CD4-positive, alpha-beta T cell (primary cell): ENCODE measurements at regions of chr12 and their contacts with region 1.

Region 1: GRCh38 chr12:95217377-95218149 is at the starts of genes FGD6 and VEZT:
- DNase-seq: peak; percentile 94 to 99 (median 98)
- ATAC-seq: peak; percentile 90
- H3K4me3 ChIP-seq: peak within 1 kb of the TSS; percentile 86
- H3K4me3 Mint-ChIP-seq: peak within 1 kb of the TSS; percentile 94
- H3K27ac ChIP-seq: peak within 1 kb of the TSS; percentile 95 to 96
- H3K27ac Mint-ChIP-seq: peak within 1 kb of the TSS; percentile 88
- H3K4me1 ChIP-seq: peaks cover 12% of the 10 kb centered on the region
- H3K4me1 Mint-ChIP-seq: peaks cover 47% of the 10 kb centered on the region
- H3K27me3 ChIP-seq: no peaks in the 10 kb centered on the region
- H3K27me3 Mint-ChIP-seq: peaks cover 4% of the 10 kb centered on the region
- CTCF ChIP-seq: peak; percentile 65
- total RNA-seq, gene FGD6: 1.5 TPM
- total RNA-seq, gene VEZT: 52.6 to 57.2 TPM

Region 2: GRCh38 chr12:93476555-93476954 is 1741.0 kb before region 1 on chr12:
- CTCF ChIA-PET with region 1: no interaction called
- POLR2A ChIA-PET with region 1: no interaction called
- intact Hi-C with region 1: no loop called
- DNase-seq: no peak
- ATAC-seq: no peak
- H3K4me3 ChIP-seq: no peak overlapping the region
- H3K4me3 Mint-ChIP-seq: no peak overlapping the region
- H3K27ac ChIP-seq: no peak overlapping the region
- H3K27ac Mint-ChIP-seq: no peak overlapping the region
- H3K4me1 ChIP-seq: no peaks in the 10 kb centered on the region
- H3K4me1 Mint-ChIP-seq: no peaks in the 10 kb centered on the region
- H3K27me3 ChIP-seq: no peaks in the 10 kb centered on the region
- H3K27me3 Mint-ChIP-seq: no peaks in the 10 kb centered on the region
- CTCF ChIP-seq: no peak

Region 3: GRCh38 chr12:95072900-95073697 is 144.5 kb before region 1 on chr12 and contains the start of gene NR2C1:
- CTCF ChIA-PET with region 1: interaction called, 13 read pairs
- POLR2A ChIA-PET with region 1: interaction called, 12 read pairs
- intact Hi-C with region 1: loop called (anchors 2 kb)
- DNase-seq: peak; percentile 85 to 97 (median 90)
- ATAC-seq: peak; percentile 98
- H3K4me3 ChIP-seq: peak within 1 kb of the TSS; percentile 84
- H3K4me3 Mint-ChIP-seq: peak within 1 kb of the TSS; percentile 98
- H3K27ac ChIP-seq: peak within 1 kb of the TSS; percentile 62 to 72
- H3K27ac Mint-ChIP-seq: peak within 1 kb of the TSS; percentile 89
- H3K4me1 ChIP-seq: peaks cover 17% of the 10 kb centered on the region
- H3K4me1 Mint-ChIP-seq: peaks cover 23% of the 10 kb centered on the region
- H3K27me3 ChIP-seq: no peaks in the 10 kb centered on the region
- H3K27me3 Mint-ChIP-seq: no peaks in the 10 kb centered on the region
- CTCF ChIP-seq: no peak
- total RNA-seq, gene NR2C1: 48.3 to 58.9 TPM

Region 4: GRCh38 chr12:95117178-95117599 is 100.4 kb before region 1 on chr12:
- CTCF ChIA-PET with region 1: interaction called, 13 read pairs
- POLR2A ChIA-PET with region 1: interaction called, 4 read pairs
- intact Hi-C with region 1: loop called (anchors 1 to 2 kb)
- DNase-seq: peak; percentile 24 to 80 (median 50)
- ATAC-seq: peak; percentile 86
- H3K4me3 ChIP-seq: no peak overlapping the region
- H3K4me3 Mint-ChIP-seq: no peak overlapping the region
- H3K27ac ChIP-seq: no peak overlapping the region
- H3K27ac Mint-ChIP-seq: no peak overlapping the region
- H3K4me1 ChIP-seq: no peaks in the 10 kb centered on the region
- H3K4me1 Mint-ChIP-seq: no peaks in the 10 kb centered on the region
- H3K27me3 ChIP-seq: no peaks in the 10 kb centered on the region
- H3K27me3 Mint-ChIP-seq: no peaks in the 10 kb centered on the region
- CTCF ChIP-seq: peak; percentile 84

Region 5: GRCh38 chr12:95473884-95474659 is 256.5 kb after region 1 on chr12 and contains the start of gene METAP2:
- CTCF ChIA-PET with region 1: interaction called, 4 read pairs
- POLR2A ChIA-PET with region 1: interaction called, 62 read pairs
- intact Hi-C with region 1: loop called (anchors 1 to 5 kb)
- DNase-seq: peak; percentile 82 to 95 (median 88)
- ATAC-seq: peak; percentile 96
- H3K4me3 ChIP-seq: peak within 1 kb of the TSS; percentile 92
- H3K4me3 Mint-ChIP-seq: peak within 1 kb of the TSS; percentile 100
- H3K27ac ChIP-seq: peak within 1 kb of the TSS; percentile 56 to 79
- H3K27ac Mint-ChIP-seq: peak within 1 kb of the TSS; percentile 92
- H3K4me1 ChIP-seq: peaks cover 32% of the 10 kb centered on the region
- H3K4me1 Mint-ChIP-seq: peaks cover 67% of the 10 kb centered on the region
- H3K27me3 ChIP-seq: no peaks in the 10 kb centered on the region
- H3K27me3 Mint-ChIP-seq: no peaks in the 10 kb centered on the region
- CTCF ChIP-seq: no peak
- total RNA-seq, gene METAP2: 60.2 to 66.3 TPM

Region 6: GRCh38 chr12:95532851-95533250 is 315.3 kb after region 1 on chr12:
- CTCF ChIA-PET with region 1: no interaction called
- POLR2A ChIA-PET with region 1: interaction called, 6 read pairs
- intact Hi-C with region 1: loop called in 1 of 2 experiments (anchors 5 kb)
- DNase-seq: no peak
- ATAC-seq: no peak
- H3K4me3 ChIP-seq: no peak overlapping the region
- H3K4me3 Mint-ChIP-seq: no peak overlapping the region
- H3K27ac ChIP-seq: no peak overlapping the region
- H3K27ac Mint-ChIP-seq: no peak overlapping the region
- H3K4me1 ChIP-seq: no peaks in the 10 kb centered on the region
- H3K4me1 Mint-ChIP-seq: peaks cover 5% of the 10 kb centered on the region
- H3K27me3 ChIP-seq: no peaks in the 10 kb centered on the region
- H3K27me3 Mint-ChIP-seq: no peaks in the 10 kb centered on the region
- CTCF ChIP-seq: no peak

Region 7: GRCh38 chr12:95548539-95549391 is 331.2 kb after region 1 on chr12:
- CTCF ChIA-PET with region 1: no interaction called
- POLR2A ChIA-PET with region 1: interaction called, 3 read pairs
- intact Hi-C with region 1: loop called in 1 of 2 experiments (anchors 5 kb)
- DNase-seq: peak; percentile 48 to 89 (median 69)
- ATAC-seq: peak; percentile 82
- H3K4me3 ChIP-seq: peak overlapping the region; percentile 73
- H3K4me3 Mint-ChIP-seq: peak overlapping the region; percentile 96
- H3K27ac ChIP-seq: peak overlapping the region; percentile 66 to 72
- H3K27ac Mint-ChIP-seq: peak overlapping the region; percentile 84
- H3K4me1 ChIP-seq: peaks cover 15% of the 10 kb centered on the region
- H3K4me1 Mint-ChIP-seq: peaks cover 52% of the 10 kb centered on the region
- H3K27me3 ChIP-seq: no peaks in the 10 kb centered on the region
- H3K27me3 Mint-ChIP-seq: peaks cover 16% of the 10 kb centered on the region
- CTCF ChIP-seq: no peak

Region 8: DNA sequence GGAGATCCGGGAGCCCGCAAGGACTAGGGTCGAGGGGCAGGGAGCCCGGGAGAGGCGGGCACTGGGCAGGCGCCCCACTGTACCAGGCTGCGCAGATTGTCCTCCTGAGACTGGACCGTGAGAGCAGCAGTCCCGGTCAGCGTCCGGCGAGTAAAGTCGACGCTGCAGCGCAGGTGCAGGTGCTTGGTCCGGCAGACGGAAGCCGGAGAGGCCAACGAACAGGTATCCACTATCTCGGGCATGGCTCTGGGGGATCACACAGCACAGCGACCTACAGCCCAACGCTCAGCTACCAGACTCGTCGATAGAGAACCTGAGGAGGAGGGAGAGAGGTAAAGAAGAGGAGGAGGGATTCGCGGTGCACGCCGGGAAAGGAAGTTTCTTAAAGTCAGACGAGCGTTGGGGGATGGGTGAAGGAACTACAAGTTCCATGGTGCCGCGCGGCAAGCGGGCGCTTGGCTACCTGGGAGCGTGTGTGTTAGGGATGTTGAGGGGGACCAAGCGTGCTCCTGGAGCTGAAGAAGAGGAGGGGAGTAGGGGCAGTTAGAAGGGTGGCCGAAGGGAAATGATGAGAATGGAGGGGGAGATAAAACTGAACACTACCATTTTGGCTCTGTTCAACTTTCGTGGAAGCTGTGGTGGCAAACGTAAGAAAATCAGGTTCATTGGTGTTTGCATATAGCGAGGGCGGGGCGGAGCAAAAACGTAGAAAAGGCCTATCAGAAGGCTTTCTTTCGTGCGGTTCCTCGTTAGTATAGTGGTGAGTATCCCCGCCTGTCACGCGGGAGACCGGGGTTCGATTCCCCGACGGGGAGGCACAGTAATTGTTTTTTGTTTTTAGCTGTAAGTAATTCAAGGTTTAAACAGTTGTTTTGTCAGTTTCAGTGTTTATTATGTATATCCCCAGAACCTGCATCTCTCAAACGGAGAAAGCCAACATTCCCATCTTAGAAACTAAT is 818.0 kb after region 1 on chr12 and contains the start of gene LTA4H:
- CTCF ChIA-PET with region 1: no interaction called
- POLR2A ChIA-PET with region 1: interaction called, 4 read pairs
- intact Hi-C with region 1: loop called in 1 of 2 experiments (anchors 5 kb)
- DNase-seq: peak; percentile 92 to 99 (median 96)
- ATAC-seq: peak; percentile 93
- H3K4me3 ChIP-seq: peak within 1 kb of the TSS; percentile 89
- H3K4me3 Mint-ChIP-seq: no peak within 1 kb of the TSS
- H3K27ac ChIP-seq: peak within 1 kb of the TSS; percentile 59 to 60
- H3K27ac Mint-ChIP-seq: no peak within 1 kb of the TSS
- H3K4me1 ChIP-seq: peaks cover 20% of the 10 kb centered on the region
- H3K4me1 Mint-ChIP-seq: peaks cover 11% of the 10 kb centered on the region
- H3K27me3 ChIP-seq: no peaks in the 10 kb centered on the region
- H3K27me3 Mint-ChIP-seq: no peaks in the 10 kb centered on the region
- CTCF ChIP-seq: no peak
- total RNA-seq, gene LTA4H: 43.0 to 44.0 TPM